ENCODE measurements at regions of chrX and their contacts with region 1.

Region 1: DNA sequence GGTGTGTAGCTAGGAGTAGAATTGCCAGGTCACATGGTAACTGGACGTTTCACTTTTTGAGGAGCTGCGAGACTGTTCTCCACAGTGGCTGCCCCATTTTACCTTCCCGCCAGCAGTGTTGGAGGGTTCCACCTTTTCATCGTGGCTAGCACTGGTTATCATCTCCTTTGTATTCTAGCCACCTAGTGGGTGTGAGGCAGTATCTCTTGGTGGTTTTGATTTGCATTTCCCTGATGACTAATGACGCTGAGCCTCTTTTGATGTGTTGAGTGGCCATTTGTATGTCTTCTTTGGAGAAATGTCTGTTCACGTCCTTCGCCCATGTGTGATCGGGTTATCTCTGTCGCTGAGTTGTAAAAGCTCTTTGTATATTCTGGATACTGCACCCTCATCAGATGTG is 10.6 kb downstream of the ABCD1 start:
- DNase-seq: no peak
- ATAC-seq: peak; percentile 91
- H3K4me3 ChIP-seq: no peak overlapping the region
- H3K27ac ChIP-seq: no peak overlapping the region
- H3K4me1 ChIP-seq: no peaks in the 10 kb centered on the region
- H3K27me3 ChIP-seq: no peaks in the 10 kb centered on the region
- CTCF ChIP-seq: peak in 1 of 3 experiments; percentile 18; a peak in 1 of 6 replicates
- EP300 ChIP-seq: no peak
- POLR2A ChIP-seq: no peak
- RAD21 ChIP-seq: no peak

Region 2: GRCh38 chrX:153782313-153782712 is 47.0 kb after region 1 on chrX:
- CTCF ChIA-PET with region 1: no interaction called
- POLR2A ChIA-PET with region 1: no interaction called
- RAD21 ChIA-PET with region 1: no interaction called
- SMC1A ChIA-PET with region 1: no interaction called
- in situ Hi-C with region 1: loop called (anchors 10 kb)
- intact Hi-C with region 1: no loop called
- DNase-seq: no peak
- ATAC-seq: no peak
- H3K4me3 ChIP-seq: no peak overlapping the region
- H3K27ac ChIP-seq: no peak overlapping the region
- H3K4me1 ChIP-seq: no peaks in the 10 kb centered on the region
- H3K27me3 ChIP-seq: no peaks in the 10 kb centered on the region
- CTCF ChIP-seq: no peak
- EP300 ChIP-seq: no peak
- POLR2A ChIP-seq: no peak
- RAD21 ChIP-seq: no peak